ENCODE measurements at regions of chr1 and their contacts with region 1.

Region 1: DNA sequence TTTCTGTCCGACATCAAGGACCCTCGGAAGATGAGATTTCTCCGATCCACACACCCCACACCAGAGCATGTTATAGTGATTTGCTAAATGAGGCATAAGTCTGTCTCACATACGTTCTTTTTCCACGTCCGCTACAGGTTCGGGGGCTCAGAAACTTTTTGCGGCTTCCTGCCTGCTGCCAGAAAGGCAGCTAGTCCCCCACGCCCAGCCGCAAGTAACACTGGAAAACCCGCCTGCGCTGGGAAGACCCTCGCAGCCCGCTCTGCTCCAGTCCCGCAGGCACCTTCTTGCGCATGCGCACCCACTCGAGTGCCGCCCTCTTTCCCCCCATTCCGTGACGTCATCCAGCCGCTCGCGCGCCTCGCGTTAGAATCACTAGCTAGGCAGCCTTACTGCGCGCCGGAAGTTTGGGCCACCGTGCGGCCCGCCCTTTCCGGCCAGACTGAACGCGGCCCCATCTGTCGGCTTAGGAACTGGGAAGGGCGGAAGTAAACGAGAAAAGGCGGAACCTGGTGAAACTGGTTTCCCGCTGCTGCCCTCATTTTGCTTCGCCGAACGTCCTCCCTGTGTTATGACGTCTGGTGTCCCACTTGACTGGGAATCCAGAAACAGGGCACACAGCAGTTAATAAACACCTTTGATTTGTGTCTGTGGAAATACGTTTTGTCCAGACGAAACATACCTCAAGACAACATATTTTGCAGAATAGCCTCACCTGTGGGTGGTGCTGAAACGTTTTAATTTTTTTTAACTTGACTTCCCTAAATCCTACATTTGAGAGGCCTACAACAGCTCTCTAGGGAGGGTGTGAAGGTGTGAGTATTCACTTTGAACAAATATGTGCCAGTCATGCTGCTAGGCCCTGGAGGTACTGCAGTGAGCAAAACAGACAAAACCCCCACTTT is at the start of gene C1orf74:
- DNase-seq: peak; percentile 100
- ATAC-seq: peak; percentile 99
- H3K4me3 Mint-ChIP-seq: peak within 1 kb of the TSS; percentile 89
- H3K27ac Mint-ChIP-seq: peak within 1 kb of the TSS; percentile 97
- H3K4me1 Mint-ChIP-seq: peaks cover 30% of the 10 kb centered on the region
- H3K27me3 Mint-ChIP-seq: no peaks in the 10 kb centered on the region
- total RNA-seq, gene C1orf74: 3.7 to 4.3 TPM

Region 2: DNA sequence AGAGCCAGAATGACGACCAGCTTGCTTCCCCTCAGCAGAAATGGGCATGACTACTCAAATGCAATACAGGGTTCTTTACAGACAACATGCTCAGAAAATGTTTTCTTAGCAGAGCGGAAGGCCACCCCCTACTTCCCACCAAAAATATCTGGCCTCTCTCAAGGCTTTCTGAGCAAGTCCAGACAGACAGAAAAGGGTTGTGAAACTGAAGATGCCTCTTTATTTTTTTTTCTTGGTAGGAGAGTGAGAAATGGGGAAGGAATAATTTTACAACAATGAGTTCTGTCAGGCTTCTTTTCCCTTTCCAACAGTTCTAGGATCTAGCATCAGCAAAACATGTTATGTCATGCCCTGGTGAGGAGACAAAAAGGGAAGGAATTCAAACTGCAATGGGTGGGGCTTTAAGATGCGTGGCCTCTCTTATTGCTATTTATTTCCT is 373.0 kb before region 1 on chr1:
- CTCF ChIA-PET with region 1: no interaction called
- POLR2A ChIA-PET with region 1: no interaction called
- intact Hi-C with region 1: no loop called
- DNase-seq: no peak
- ATAC-seq: no peak
- H3K4me3 Mint-ChIP-seq: no peak overlapping the region
- H3K27ac Mint-ChIP-seq: no peak overlapping the region
- H3K4me1 Mint-ChIP-seq: no peaks in the 10 kb centered on the region
- H3K27me3 Mint-ChIP-seq: peaks cover 33% of the 10 kb centered on the region

Region 3: GRCh38 chr1:209755926-209756614 is 28.4 kb before region 1 on chr1 and contains the start of gene TRAF3IP3:
- CTCF ChIA-PET with region 1: interaction called, 6 read pairs
- POLR2A ChIA-PET with region 1: interaction called, 5 read pairs
- intact Hi-C with region 1: loop called (anchors 1 kb)
- DNase-seq: peak; percentile 89
- ATAC-seq: peak; percentile 76
- H3K4me3 Mint-ChIP-seq: peak within 1 kb of the TSS; percentile 95
- H3K27ac Mint-ChIP-seq: peak within 1 kb of the TSS; percentile 99
- H3K4me1 Mint-ChIP-seq: peaks cover 75% of the 10 kb centered on the region
- H3K27me3 Mint-ChIP-seq: no peaks in the 10 kb centered on the region
- total RNA-seq, gene TRAF3IP3: 136 to 138 TPM

Region 4: DNA sequence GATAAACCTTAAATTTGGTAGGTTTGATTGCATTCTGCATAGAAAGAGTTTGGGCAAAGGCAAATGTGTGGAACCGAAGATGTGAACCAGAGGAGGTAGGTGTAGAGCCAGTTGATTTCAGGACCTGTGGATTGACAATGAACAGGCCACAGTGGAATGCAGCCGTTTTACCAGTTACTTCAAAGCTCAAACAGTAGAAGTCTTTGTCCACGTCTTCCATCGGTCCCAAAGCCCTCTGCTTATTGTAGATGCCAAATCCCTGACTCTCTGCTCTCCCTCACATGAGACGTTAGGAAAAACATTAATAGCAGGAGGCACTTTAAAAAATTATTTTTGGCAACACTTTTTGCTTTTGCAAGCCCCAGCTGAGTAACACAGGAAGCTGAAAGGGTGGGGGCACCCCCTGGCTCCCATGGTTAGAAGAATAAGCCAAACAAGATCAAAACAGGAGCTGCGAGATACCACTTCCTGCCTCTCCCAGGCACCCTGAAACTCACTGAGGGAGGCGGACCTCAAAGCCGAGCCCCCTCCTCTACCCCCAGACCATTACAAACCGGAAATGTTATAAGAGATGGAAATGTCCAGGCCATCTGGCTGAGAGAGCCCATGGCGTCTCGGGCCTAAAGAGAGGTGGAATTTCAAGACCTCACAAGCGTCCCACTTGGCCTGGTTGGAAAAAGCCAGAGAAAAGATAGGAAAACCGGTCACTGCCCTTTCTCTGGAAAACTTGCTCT is 15.2 kb before region 1 on chr1:
- CTCF ChIA-PET with region 1: interaction called, 24 read pairs
- POLR2A ChIA-PET with region 1: interaction called, 16 read pairs
- intact Hi-C with region 1: loop called (anchors 1 kb)
- DNase-seq: peak; percentile 88
- ATAC-seq: peak; percentile 67
- H3K4me3 Mint-ChIP-seq: no peak overlapping the region
- H3K27ac Mint-ChIP-seq: no peak overlapping the region
- H3K4me1 Mint-ChIP-seq: peaks cover 48% of the 10 kb centered on the region
- H3K27me3 Mint-ChIP-seq: no peaks in the 10 kb centered on the region

Region 5: GRCh38 chr1:209805875-209806760 is 21.6 kb after region 1 on chr1 and contains the start of gene IRF6:
- CTCF ChIA-PET with region 1: interaction called, 4 read pairs
- POLR2A ChIA-PET with region 1: no interaction called
- intact Hi-C with region 1: loop called in 1 of 2 experiments (anchors 1 kb)
- DNase-seq: peak; percentile 64
- ATAC-seq: peak; percentile 73
- H3K4me3 Mint-ChIP-seq: peak within 1 kb of the TSS; percentile 54
- H3K27ac Mint-ChIP-seq: no peak within 1 kb of the TSS
- H3K4me1 Mint-ChIP-seq: peaks cover 14% of the 10 kb centered on the region
- H3K27me3 Mint-ChIP-seq: peaks cover 16% of the 10 kb centered on the region
- total RNA-seq, gene IRF6: 0.11 to 0.14 TPM